ENCODE measurements at regions of chr3 and their contacts with region 1.

Region 1: DNA sequence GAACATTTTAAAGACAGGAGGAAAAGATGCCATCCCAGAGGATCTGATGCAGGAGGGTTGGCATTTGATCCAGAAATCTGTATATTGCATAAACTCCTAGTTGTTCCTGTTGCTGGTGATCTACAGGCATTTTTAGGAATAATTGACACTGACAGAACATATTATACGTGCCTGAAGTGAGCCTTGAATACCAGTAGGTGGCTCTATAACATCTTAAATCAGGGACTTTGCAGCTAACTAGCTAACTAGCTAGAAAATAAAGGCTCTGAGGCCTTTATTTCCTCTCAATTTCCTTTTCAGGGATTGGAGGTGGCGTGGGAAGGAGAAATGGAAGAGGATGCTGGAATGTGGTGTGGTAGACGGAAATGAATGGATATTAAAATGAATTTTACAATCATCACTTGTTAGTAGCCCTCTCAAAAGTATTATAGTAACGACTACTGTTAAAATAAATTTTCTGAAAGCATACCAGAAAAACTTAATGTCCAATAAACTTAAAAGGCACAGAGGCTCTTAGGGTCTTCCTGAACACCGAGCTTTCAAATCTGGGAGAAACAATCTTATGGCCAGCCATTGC is 73.9 kb upstream of the ZBED2 start:
- DNase-seq: peak; percentile 29
- CTCF ChIP-seq: peak; percentile 73

Region 2: DNA sequence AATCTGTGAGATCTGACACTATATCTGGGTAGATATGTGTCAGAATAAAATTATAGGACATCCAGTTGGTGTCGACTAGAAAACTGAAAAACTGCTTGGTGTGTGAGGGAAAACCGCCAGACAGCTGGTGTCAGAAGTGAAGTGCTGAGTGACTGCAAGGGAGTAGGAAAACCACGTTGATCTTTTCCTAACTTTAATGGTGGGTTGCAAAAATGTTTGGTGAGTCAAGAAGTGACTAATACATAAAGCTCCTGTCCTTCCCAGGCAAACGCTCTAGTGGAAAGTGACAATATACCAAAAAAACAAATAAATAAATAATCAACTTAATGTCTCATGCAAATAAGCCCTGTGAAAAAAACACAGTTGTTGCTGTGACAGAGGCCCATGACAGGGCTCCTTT is 134.3 kb before region 1 on chr3:
- CTCF ChIA-PET with region 1: no interaction called
- POLR2A ChIA-PET with region 1: no interaction called
- DNase-seq: no peak
- CTCF ChIP-seq: no peak

Region 3: DNA sequence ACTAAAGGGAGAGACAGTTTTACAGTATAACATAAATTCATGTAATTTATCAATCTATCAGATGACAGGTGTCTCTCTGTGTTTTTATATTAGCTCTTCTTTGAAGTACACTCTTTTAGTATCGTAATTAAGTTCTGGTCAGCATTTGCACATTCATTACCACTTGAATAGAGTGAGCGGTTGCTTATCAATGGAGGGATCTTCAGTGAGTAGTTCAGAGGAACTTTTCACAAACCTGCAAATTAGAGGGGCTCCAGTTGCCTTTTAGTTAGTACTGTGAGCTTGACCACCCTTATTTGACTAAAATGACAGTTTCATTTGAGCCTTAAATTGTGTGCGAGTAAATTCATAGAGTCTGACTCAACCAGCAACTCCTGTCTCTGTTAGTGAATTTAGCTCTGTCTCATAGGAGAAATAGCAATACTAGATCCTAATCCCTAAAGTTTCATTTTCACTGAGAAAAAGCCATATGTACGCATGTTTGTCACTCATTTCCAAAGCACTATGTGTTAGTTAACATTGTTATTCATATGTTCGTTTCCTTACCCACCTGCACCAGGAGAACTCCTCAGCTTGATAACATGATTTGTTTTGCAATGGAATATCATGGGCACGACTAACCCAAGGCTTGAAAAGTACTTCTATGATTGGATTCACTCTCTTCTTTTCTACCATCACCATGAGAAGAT is 16.4 kb before region 1 on chr3:
- CTCF ChIA-PET with region 1: interaction called, 23 read pairs
- POLR2A ChIA-PET with region 1: no interaction called
- DNase-seq: no peak
- CTCF ChIP-seq: no peak

Region 4: DNA sequence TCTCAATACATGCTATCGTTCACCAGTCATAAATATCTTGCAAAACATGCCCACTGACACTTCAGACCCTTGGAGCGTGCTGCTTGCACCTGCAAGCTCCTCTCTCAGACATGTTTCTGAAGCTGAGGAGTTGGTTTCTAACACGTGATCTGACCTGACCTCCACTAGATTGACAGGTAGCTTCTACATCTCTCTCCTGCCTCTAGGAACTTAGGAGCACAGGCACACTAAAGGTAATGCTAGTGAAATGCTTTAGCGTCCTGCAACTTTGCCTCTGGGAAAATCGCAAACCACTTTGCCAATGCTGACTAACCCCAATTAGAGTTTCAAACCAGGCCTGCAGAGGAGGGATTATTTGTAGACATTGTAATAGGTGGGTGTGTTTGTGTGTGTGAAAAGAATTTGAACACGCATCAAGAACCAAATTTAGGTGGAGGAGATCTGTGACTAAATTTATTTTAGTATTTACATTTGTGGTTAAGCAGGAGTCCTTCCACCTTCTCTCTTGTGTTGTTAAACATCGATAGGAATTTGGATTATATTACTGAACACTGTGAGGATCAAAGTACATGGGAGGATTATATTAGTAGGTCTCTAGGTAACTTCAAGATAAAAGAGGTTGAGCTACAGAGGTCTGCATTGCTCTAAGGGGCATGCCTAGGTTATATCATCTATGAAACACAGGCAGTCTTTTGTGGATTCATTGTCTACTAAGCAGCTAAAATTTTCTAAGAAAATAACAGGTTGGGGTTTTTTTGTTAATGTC is 12.8 kb after region 1 on chr3:
- CTCF ChIA-PET with region 1: interaction called, 26 read pairs
- POLR2A ChIA-PET with region 1: no interaction called
- DNase-seq: no peak
- CTCF ChIP-seq: no peak

Region 5: GRCh38 chr3:112086076-112086854 is 417.3 kb after region 1 on chr3 and contains the start of gene C3orf52:
- CTCF ChIA-PET with region 1: no interaction called
- POLR2A ChIA-PET with region 1: no interaction called
- DNase-seq: peak; percentile 87
- CTCF ChIP-seq: no peak

Measured in GM10248 (cell line).